H1 (cell line): ENCODE measurements at regions of chr7 and their contacts with region 1.

Region 1: DNA sequence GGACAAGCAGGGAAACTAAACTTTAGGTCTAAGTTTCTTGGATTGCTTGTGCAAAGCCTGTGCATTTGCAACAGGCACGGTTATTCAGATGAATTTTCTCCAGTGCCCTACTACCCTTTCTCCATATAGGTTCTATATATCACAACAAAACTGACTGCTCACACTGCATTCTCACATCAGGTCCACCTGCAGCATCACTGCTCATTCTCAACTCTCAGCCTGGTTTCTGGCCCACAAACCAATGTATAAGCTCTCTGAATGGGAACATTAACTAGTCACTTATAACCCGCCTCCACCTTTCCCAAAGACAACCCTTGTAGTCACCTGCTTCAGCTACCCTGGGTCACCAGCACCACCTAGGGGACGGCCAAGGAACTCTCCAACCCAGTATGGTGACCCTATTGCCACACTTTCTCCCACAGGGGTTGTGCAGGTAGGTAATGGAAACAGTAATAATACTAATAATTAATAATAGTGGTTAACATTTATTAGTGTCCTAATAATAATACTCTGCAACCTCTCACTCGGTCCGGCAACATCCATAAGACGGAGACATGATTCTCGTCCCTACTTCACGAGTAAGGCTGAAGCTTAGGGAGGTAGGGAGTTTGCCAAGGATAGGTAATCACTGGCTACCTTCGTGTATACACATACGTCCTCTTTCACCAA is 97.3 kb downstream of the CLEC2L start:
- DNase-seq: peak in 1 of 2 experiments; percentile 93
- H3K4me3 ChIP-seq: no peak overlapping the region
- H3K27ac ChIP-seq: no peak overlapping the region
- H3K4me1 ChIP-seq: no peaks in the 10 kb centered on the region; a peak in 1 of 7 replicates
- H3K27me3 ChIP-seq: no peaks in the 10 kb centered on the region
- CTCF ChIP-seq: peak; percentile 88 to 90 (median 90)
- EP300 ChIP-seq: no peak
- POLR2A ChIP-seq: no peak
- RAD21 ChIP-seq: peak; percentile 90 to 93

Region 2: DNA sequence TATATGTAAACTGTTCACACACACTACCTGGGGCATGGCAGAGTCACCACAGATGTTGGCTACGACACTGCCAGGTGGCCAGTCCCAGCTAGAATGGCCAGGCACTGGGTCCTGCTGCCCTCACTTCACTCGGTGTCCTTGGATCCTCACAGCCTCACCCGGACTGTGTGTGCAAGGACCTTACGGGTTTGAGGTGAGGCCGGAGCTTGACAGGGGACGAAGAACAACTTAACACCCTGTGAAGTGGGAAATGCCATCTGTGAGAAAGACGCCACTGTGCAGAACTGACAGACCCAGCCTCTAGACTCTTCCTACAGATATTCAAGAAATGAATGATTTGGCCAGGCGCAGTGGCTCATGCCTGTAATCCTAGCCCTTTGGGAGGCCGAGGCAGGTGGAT is 184.0 kb before region 1 on chr7:
- CTCF ChIA-PET with region 1: interaction called, 32 read pairs
- POLR2A ChIA-PET with region 1: no interaction called
- DNase-seq: no peak
- H3K4me3 ChIP-seq: no peak overlapping the region
- H3K27ac ChIP-seq: no peak overlapping the region
- H3K4me1 ChIP-seq: no peaks in the 10 kb centered on the region; a peak in 1 of 7 replicates
- H3K27me3 ChIP-seq: no peaks in the 10 kb centered on the region
- CTCF ChIP-seq: no peak
- EP300 ChIP-seq: no peak
- POLR2A ChIP-seq: no peak
- RAD21 ChIP-seq: no peak

Region 3: GRCh38 chr7:139635526-139636302 is 14.9 kb after region 1 on chr7:
- CTCF ChIA-PET with region 1: interaction called, 76 read pairs
- POLR2A ChIA-PET with region 1: no interaction called
- DNase-seq: no peak
- H3K4me3 ChIP-seq: no peak overlapping the region
- H3K27ac ChIP-seq: no peak overlapping the region
- H3K4me1 ChIP-seq: peaks cover 0 to 3% (median 0%) of the 10 kb centered on the region in 4 experiments; a peak in 3 of 7 replicates
- H3K27me3 ChIP-seq: no peaks in the 10 kb centered on the region
- CTCF ChIP-seq: no peak
- EP300 ChIP-seq: no peak
- POLR2A ChIP-seq: no peak
- RAD21 ChIP-seq: no peak

Region 4: GRCh38 chr7:139995017-139995931 is 374.5 kb after region 1 on chr7:
- CTCF ChIA-PET with region 1: interaction called, 111 read pairs
- POLR2A ChIA-PET with region 1: no interaction called
- DNase-seq: no peak
- H3K4me3 ChIP-seq: no peak overlapping the region
- H3K27ac ChIP-seq: no peak overlapping the region
- H3K4me1 ChIP-seq: peaks cover 0 to 5% (median 0%) of the 10 kb centered on the region in 4 experiments; a peak in 1 of 7 replicates
- H3K27me3 ChIP-seq: no peaks in the 10 kb centered on the region
- CTCF ChIP-seq: no peak
- EP300 ChIP-seq: no peak
- POLR2A ChIP-seq: no peak
- RAD21 ChIP-seq: no peak